Naive thymus-derived CD4-positive, alpha-beta T cell (primary cell): ENCODE measurements at regions of chr19 and their contacts with region 1.

Region 1: GRCh38 chr19:6460101-6460853 is 685 bp upstream of the SLC25A23 start:
- DNase-seq: peak; percentile 87 to 97 (median 96)
- ATAC-seq: peak; percentile 90
- H3K4me3 ChIP-seq: peak overlapping the region; percentile 72
- H3K4me3 Mint-ChIP-seq: peak overlapping the region; percentile 92 to 99 (median 98)
- H3K27ac ChIP-seq: peak overlapping the region; percentile 83
- H3K27ac Mint-ChIP-seq: peak overlapping the region; percentile 83 to 96 (median 91)
- H3K4me1 ChIP-seq: peaks cover 0 to 4% of the 10 kb centered on the region in 2 donors
- H3K4me1 Mint-ChIP-seq: peaks cover 11 to 40% (median 34%) of the 10 kb centered on the region in 7 donors
- H3K27me3 ChIP-seq: no peaks in the 10 kb centered on the region
- H3K27me3 Mint-ChIP-seq: peaks cover 0 to 8% (median 0%) of the 10 kb centered on the region in 5 donors

Region 2: GRCh38 chr19:6199240-6199983 is 260.9 kb before region 1 on chr19:
- CTCF ChIA-PET with region 1: no interaction called
- POLR2A ChIA-PET with region 1: no interaction called
- intact Hi-C with region 1: loop called in 1 of 2 experiments (anchors 1 kb)
- DNase-seq: peak; percentile 97 to 100 (median 99)
- ATAC-seq: peak; percentile 93
- H3K4me3 ChIP-seq: peak overlapping the region; percentile 97
- H3K4me3 Mint-ChIP-seq: peak overlapping the region; percentile 92 to 99 (median 95)
- H3K27ac ChIP-seq: peak overlapping the region; percentile 70
- H3K27ac Mint-ChIP-seq: peak overlapping the region; percentile 89 to 97 (median 91)
- H3K4me1 ChIP-seq: peaks cover 6% of the 10 kb centered on the region in 2 donors
- H3K4me1 Mint-ChIP-seq: peaks cover 5 to 20% (median 18%) of the 10 kb centered on the region in 7 donors
- H3K27me3 ChIP-seq: no peaks in the 10 kb centered on the region
- H3K27me3 Mint-ChIP-seq: peaks cover 0 to 8% (median 4%) of the 10 kb centered on the region in 5 donors

Region 3: DNA sequence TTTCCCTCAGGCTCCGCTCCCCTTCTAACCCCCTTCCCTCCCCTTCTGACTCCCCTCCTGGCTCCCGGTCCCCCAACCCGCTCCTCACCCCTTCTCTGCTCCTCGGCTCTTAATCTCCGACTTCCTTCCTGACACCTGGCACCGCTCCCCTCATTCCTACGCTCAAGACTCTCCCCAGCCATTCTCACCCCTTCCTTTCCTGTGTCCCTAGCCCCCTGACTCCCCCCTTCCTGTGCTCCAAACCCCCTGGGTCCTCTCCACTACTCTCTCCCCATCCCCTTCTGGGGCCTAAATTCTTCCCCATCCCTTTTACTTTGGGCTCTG is 98.3 kb before region 1 on chr19:
- CTCF ChIA-PET with region 1: interaction called, 3 read pairs
- POLR2A ChIA-PET with region 1: no interaction called
- intact Hi-C with region 1: loop called in 1 of 2 experiments (anchors 1 kb)
- DNase-seq: no peak
- ATAC-seq: no peak
- H3K4me3 ChIP-seq: peak overlapping the region; percentile 76
- H3K4me3 Mint-ChIP-seq: peak overlapping the region; percentile 83 to 100 (median 97)
- H3K27ac ChIP-seq: peak overlapping the region; percentile 82
- H3K27ac Mint-ChIP-seq: peak overlapping the region; percentile 87 to 98 (median 96)
- H3K4me1 ChIP-seq: peaks cover 10 to 13% of the 10 kb centered on the region in 2 donors
- H3K4me1 Mint-ChIP-seq: peaks cover 10 to 37% (median 22%) of the 10 kb centered on the region in 7 donors
- H3K27me3 ChIP-seq: no peaks in the 10 kb centered on the region
- H3K27me3 Mint-ChIP-seq: no peaks in the 10 kb centered on the region

Region 4: GRCh38 chr19:6424939-6425731 is 35.1 kb before region 1 on chr19:
- CTCF ChIA-PET with region 1: no interaction called
- POLR2A ChIA-PET with region 1: interaction called, 3 read pairs
- intact Hi-C with region 1: loop called (anchors 1 kb)
- DNase-seq: peak; percentile 66 to 100 (median 99)
- ATAC-seq: peak; percentile 89
- H3K4me3 ChIP-seq: peak overlapping the region; percentile 39
- H3K4me3 Mint-ChIP-seq: peak overlapping the region; percentile 69 to 87 (median 78)
- H3K27ac ChIP-seq: peak overlapping the region; percentile 77
- H3K27ac Mint-ChIP-seq: peak overlapping the region; percentile 78 to 97 (median 94)
- H3K4me1 ChIP-seq: peaks cover 15 to 32% of the 10 kb centered on the region in 2 donors
- H3K4me1 Mint-ChIP-seq: peaks cover 18 to 48% (median 41%) of the 10 kb centered on the region in 7 donors
- H3K27me3 ChIP-seq: no peaks in the 10 kb centered on the region
- H3K27me3 Mint-ChIP-seq: no peaks in the 10 kb centered on the region

Region 5: DNA sequence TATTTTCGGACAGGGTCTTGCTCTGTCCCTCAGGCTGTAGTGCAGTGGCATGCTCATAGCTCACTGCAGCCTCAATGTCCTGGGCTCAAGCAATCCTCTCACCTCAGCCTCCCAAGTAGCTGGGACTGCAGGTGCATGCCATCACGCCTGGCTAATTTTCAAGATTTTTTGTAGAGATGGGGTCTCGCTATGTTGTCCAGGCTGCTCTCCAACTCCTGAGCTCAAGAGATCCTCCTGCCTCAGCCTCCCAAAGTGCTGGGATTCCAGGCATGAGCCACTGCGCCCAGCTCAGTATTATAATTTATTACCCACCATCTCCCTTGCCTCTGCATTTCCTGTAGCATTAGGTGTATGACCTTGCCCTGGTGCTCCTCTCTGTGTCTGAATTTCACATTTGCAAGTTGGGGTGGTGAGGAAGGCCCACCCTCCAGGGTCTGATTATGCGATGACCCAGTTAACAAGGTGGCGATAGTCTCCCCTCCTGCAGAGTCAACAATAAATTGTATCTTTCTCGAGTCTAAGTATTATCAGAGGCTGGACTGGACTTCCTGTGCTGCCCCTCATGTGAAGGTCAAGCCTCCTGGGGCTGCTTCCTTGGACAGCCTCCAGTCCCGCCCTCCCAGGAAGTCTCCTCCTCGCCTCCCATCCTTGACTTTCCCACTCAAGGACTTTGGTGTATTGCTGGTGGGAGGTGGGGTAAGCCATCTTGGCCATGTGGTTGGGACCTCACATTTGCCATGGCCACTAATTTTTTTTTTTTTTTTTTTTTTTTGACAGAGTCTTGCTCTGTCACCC is 43.3 kb after region 1 on chr19:
- CTCF ChIA-PET with region 1: interaction called, 4 read pairs
- POLR2A ChIA-PET with region 1: no interaction called
- intact Hi-C with region 1: loop called (anchors 1 kb)
- DNase-seq: no peak
- ATAC-seq: no peak
- H3K4me3 ChIP-seq: no peak overlapping the region
- H3K4me3 Mint-ChIP-seq: peak overlapping the region in 9 of 10 donors; percentile 7 to 93 (median 66)
- H3K27ac ChIP-seq: no peak overlapping the region
- H3K27ac Mint-ChIP-seq: peak overlapping the region in 2 of 9 donors; percentile 27 to 71
- H3K4me1 ChIP-seq: peaks cover 7 to 8% of the 10 kb centered on the region in 2 donors
- H3K4me1 Mint-ChIP-seq: peaks cover 6 to 22% (median 19%) of the 10 kb centered on the region in 7 donors
- H3K27me3 ChIP-seq: no peaks in the 10 kb centered on the region
- H3K27me3 Mint-ChIP-seq: peaks cover 0 to 26% (median 0%) of the 10 kb centered on the region in 5 donors

Region 6: DNA sequence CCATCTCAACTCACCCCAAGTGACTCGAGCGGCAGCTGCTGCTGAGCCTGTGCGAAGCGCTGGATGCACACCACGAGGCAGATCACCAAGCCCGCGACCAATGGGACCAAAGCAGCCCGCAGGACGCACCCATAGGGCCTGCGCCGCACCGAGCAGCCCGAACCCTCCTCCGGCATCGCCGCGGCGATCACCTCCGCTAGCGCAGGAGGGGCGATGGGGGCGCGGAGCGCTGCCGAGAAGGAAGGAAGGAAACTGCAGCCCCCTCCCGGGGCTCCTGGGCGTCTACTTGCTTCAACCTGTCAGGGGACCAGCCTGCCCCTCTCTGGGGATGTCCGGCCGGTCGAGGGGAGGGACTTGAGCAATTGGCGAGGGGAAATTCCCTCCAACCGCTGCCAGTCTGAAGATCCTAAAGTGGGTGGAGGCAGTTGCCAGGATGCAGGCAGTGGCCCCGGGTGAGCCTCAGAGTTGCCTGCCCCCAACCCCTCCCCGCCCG is 130.6 kb after region 1 on chr19 and contains the start of gene CD70:
- CTCF ChIA-PET with region 1: no interaction called
- POLR2A ChIA-PET with region 1: no interaction called
- intact Hi-C with region 1: no loop called
- DNase-seq: peak in 6 of 9 donors; percentile 10 to 68 (median 17)
- ATAC-seq: peak; percentile 74
- H3K4me3 ChIP-seq: peak within 1 kb of the TSS; percentile 56
- H3K4me3 Mint-ChIP-seq: peak within 1 kb of the TSS; percentile 58 to 93 (median 82)
- H3K27ac ChIP-seq: no peak within 1 kb of the TSS
- H3K27ac Mint-ChIP-seq: peak within 1 kb of the TSS in 2 of 9 donors; percentile 1 to 87
- H3K4me1 ChIP-seq: peaks cover 30 to 46% of the 10 kb centered on the region in 2 donors
- H3K4me1 Mint-ChIP-seq: peaks cover 40 to 61% (median 47%) of the 10 kb centered on the region in 7 donors
- H3K27me3 ChIP-seq: peaks cover 0 to 20% of the 10 kb centered on the region in 2 donors
- H3K27me3 Mint-ChIP-seq: peaks cover 46 to 71% (median 66%) of the 10 kb centered on the region in 5 donors
- total RNA-seq, gene CD70: 1.2 to 39.6 TPM in 2 of 5 experiments, not detected in the others

Region 7: DNA sequence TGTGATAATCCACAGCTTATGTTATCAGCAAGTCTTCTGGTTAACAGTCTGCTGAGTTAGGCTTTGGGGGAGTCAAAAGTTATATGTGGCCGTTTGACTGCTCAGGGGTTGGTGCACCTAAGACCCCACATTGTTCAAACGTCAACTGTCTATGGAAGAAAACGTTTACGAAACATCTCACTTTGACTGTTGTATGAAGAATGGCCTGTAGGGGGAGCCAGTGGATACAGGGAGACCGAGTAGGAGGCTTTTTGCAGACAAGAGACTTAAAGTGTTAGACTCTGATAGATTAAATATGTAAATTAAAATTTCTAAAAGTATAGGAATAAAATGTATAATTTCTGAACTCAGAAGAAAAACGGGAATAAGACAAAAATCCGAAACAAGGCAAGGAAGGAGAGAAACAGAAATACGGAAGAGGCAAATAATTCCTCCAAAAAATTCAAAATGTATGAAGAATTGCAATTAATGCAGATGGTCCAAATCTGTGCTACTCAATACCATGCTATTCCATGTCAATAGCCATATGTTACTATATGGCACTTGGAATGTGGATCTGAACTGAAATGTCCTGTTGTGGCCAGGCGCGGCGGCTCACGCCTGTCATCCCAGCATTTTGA is 171.8 kb after region 1 on chr19:
- CTCF ChIA-PET with region 1: no interaction called
- POLR2A ChIA-PET with region 1: no interaction called
- intact Hi-C with region 1: loop called in 1 of 2 experiments (anchors 1 kb)
- DNase-seq: peak; percentile 29 to 88 (median 78)
- ATAC-seq: peak; percentile 90
- H3K4me3 ChIP-seq: no peak overlapping the region
- H3K4me3 Mint-ChIP-seq: no peak overlapping the region
- H3K27ac ChIP-seq: no peak overlapping the region
- H3K27ac Mint-ChIP-seq: peak overlapping the region in 3 of 9 donors; percentile 7 to 20 (median 13)
- H3K4me1 ChIP-seq: peaks cover 0 to 5% of the 10 kb centered on the region in 2 donors
- H3K4me1 Mint-ChIP-seq: peaks cover 4 to 20% (median 9%) of the 10 kb centered on the region in 7 donors
- H3K27me3 ChIP-seq: no peaks in the 10 kb centered on the region
- H3K27me3 Mint-ChIP-seq: peaks cover 4 to 7% (median 5%) of the 10 kb centered on the region in 5 donors